ENCODE measurements at regions of chr15 and their contacts with region 1.

Region 1: DNA sequence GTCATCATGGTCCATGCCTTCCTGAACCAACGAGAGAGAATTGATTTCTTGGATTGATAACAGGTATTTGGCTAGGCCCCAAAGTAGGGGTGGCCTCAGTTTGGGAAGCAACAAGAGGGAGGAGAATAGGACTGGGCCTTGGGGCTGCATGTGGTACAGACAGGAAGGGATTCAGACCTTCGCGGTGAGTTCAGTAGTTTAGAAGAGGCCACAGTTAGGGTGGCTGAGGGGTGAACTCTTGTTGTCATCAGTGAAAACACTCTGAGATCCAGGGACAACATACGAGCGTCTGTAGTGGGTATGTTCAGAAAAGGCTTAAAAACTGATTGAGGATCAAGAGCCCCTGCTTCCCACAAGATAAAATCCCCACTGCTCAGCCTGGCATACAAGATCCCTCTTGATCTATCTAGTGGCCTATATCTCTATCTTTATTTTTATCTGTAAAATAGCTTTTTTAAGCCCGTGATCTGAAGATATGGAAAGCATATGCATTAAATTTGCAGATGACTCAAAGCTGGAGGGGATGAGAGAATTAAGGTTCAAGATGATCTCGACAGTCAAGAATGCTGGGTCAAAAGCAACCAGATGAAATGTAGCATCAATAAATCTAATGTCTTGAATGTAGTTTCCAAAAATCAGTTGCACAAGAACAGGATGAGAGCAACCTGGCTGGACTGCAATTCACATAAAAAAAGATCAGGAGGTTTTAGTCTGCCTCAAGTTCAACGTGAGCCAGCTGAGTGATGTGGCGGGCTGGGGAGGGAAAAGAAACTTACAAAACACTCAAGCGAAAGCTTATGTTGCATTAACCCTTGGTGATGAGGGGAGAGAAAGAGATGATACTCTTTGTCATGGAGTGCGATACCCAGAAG is 221.1 kb upstream of the TLE3 start:
- DNase-seq: no peak
- H3K4me3 ChIP-seq: no peak overlapping the region
- H3K27ac ChIP-seq: peak overlapping the region in 2 of 4 donors; percentile 37 to 51
- H3K4me1 ChIP-seq: peaks cover 22 to 53% (median 45%) of the 10 kb centered on the region in 4 donors
- H3K27me3 ChIP-seq: no peaks in the 10 kb centered on the region
- CTCF ChIP-seq: no peak
- EP300 ChIP-seq: no peak
- POLR2A ChIP-seq: no peak

Region 2: GRCh38 chr15:70196314-70197291 is 122.2 kb before region 1 on chr15:
- intact Hi-C with region 1: no loop called
- DNase-seq: no peak
- H3K4me3 ChIP-seq: no peak overlapping the region
- H3K27ac ChIP-seq: peak overlapping the region; percentile 55 to 73 (median 66)
- H3K4me1 ChIP-seq: peaks cover 14 to 47% (median 41%) of the 10 kb centered on the region in 4 donors
- H3K27me3 ChIP-seq: no peaks in the 10 kb centered on the region
- CTCF ChIP-seq: no peak
- EP300 ChIP-seq: no peak
- POLR2A ChIP-seq: no peak

Region 3: GRCh38 chr15:70271422-70272088 is 47.3 kb before region 1 on chr15:
- intact Hi-C with region 1: loop called (anchors 5 kb)
- DNase-seq: no peak
- H3K4me3 ChIP-seq: no peak overlapping the region
- H3K27ac ChIP-seq: peak overlapping the region; percentile 35 to 72 (median 48)
- H3K4me1 ChIP-seq: peaks cover 38 to 45% (median 42%) of the 10 kb centered on the region in 4 donors
- H3K27me3 ChIP-seq: no peaks in the 10 kb centered on the region
- CTCF ChIP-seq: no peak
- EP300 ChIP-seq: no peak
- POLR2A ChIP-seq: no peak